Upper lobe of right lung (tissue), 1 donor: ENCODE measurements at regions of chr9 and their contacts with region 1.

Region 1: DNA sequence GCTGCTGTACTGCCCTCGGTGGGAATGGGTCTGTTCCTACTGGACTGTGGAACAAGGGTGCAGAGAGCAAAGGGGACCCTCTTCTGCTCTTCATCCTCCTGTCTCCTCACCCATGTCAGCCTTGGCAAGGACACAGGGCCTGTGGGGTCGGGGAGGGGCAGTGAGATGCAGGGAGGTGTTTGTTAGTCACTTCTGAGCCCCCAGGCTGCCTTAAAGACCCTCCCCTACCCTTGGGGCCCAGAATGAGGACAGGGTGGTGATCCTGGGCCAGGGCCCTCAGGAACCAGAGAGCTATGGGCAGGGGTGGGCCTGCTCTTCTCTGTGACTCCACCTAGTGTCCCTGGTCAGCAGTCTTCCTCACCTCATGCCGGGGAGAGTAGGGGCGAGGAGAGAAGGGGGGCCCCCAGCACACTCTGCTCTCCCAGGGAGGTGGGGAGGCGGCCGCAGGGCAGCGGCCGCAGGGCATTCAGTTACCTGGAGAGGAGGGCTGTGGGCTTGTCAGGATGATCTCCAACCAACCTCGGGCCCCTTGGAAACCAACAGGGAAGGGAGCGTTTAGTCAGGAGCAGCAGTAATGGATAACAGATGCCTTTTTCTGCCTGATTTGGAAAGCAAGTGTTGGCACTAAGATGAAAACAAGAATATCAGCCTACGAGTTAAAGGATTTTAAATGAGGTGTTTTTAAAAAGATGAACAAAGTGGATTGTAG is 62.0 kb upstream of the GARNL3 start:
- DNase-seq: no peak
- ATAC-seq: no peak
- H3K4me3 ChIP-seq: no peak overlapping the region
- H3K27ac ChIP-seq: no peak overlapping the region
- H3K4me1 ChIP-seq: peaks cover 11% of the 10 kb centered on the region
- H3K27me3 ChIP-seq: no peaks in the 10 kb centered on the region
- CTCF ChIP-seq: no peak

Region 2: GRCh38 chr9:126939821-126940221 is 262.8 kb before region 1 on chr9:
- intact Hi-C with region 1: loop called (anchors 5 kb)
- DNase-seq: peak; percentile 71
- ATAC-seq: peak; percentile 90
- H3K4me3 ChIP-seq: no peak overlapping the region
- H3K27ac ChIP-seq: peak overlapping the region; percentile 70
- H3K4me1 ChIP-seq: peaks cover 7% of the 10 kb centered on the region
- H3K27me3 ChIP-seq: no peaks in the 10 kb centered on the region
- CTCF ChIP-seq: no peak